Activated T-helper 2 cell treated with anti-CD3 and anti-CD28 coated beads, Interferon-gamma antibody, Interleukin-2, Interleukin-4, amounts not matched to agents 10 μg/mL and 5 μg/mL and 100 μg/mL, durations not matched to agents 14 hours and 24 hours and 36 hours (primary cell): ENCODE measurements at regions of chr14 and their contacts with region 1.

Region 1: DNA sequence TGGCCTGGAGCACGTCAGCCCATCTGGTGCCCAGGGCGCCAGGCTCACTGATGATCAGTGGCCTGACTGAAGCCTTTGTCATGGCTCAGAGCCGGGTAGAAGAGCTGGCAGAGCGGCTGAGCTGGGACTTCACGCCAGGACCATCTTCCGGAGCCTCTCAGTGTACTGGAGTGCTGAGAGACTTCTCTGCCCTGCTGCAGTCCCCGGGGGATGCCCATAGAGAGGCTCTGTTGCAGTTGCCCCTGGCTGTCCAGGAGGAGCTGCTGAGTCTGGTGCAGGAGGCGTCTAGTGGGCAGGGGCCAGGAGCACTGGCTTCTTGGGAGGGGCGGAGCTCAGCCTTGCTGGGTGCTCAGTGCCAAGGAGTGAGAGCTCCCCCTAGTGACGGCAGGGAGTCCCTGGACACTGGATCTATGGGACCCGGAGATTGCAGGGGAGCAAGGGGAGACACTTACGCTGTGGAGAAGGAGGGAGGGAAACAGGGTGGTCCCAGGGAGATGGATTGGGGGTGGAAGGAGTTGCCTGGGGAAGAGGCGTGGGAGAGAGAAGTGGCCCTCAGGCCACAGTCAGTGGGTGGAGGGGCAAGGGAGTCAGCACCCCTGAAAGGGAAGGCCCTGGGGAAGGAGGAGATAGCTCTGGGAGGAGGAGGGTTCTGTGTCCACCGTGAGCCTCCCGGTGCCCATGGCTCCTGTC is 2.0 kb downstream of the KHNYN start:
- DNase-seq: peak; percentile 83
- H3K4me3 Mint-ChIP-seq: peak overlapping the region; percentile 84
- H3K27ac Mint-ChIP-seq: peak overlapping the region; percentile 91
- H3K4me1 Mint-ChIP-seq: peaks cover 30% of the 10 kb centered on the region
- H3K27me3 Mint-ChIP-seq: no peaks in the 10 kb centered on the region

Region 2: DNA sequence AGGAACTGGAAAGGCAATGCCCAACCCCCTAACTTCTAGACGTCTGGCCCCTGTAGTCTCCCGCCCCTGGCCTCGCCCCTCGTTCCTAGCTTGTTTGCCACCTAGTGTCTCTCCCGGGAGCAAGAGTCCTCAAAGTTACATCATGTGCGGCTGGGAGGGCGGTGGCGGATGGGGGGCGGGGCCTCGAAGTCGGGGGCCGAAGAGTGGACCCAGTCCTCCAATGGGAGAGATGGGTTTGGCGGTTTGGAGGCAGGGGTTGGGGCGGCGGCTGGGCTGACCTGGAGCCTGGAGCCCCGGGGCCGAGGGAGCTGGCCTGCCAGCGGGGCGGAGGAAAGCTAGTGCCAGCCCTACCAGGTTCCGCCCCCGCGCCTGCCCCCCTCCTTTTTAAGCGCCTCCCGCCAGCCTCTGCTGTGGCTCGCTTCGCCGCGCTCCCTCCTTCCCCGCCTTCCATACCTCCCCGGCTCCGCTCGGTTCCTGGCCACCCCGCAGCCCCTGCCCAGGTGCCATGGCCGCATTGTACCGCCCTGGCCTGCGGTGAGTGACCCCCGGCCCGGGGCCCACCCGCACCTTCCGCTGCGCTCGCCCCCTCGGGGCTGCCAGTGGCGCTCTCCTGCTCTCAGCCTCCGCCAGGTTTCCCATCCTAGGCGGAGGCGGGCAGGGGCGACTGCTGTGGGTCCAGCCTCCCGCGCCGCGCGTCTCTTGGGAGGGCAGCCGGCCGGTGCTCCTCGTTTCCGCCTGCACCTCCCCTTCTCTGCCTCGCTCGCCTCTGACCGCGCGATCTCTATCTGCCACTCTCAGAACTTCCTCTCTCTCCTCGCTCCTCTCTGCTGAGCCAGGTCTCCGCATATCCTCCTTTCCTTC is 337.6 kb before region 1 on chr14 and contains the start of gene PCK2:
- intact Hi-C with region 1: loop called (anchors 10 kb)
- DNase-seq: peak; percentile 68
- H3K4me3 Mint-ChIP-seq: peak within 1 kb of the TSS; percentile 97
- H3K27ac Mint-ChIP-seq: peak within 1 kb of the TSS; percentile 98
- H3K4me1 Mint-ChIP-seq: peaks cover 31% of the 10 kb centered on the region
- H3K27me3 Mint-ChIP-seq: no peaks in the 10 kb centered on the region
- total RNA-seq, gene PCK2: 62.7 and 62.8 TPM in 2 replicates

Region 3: DNA sequence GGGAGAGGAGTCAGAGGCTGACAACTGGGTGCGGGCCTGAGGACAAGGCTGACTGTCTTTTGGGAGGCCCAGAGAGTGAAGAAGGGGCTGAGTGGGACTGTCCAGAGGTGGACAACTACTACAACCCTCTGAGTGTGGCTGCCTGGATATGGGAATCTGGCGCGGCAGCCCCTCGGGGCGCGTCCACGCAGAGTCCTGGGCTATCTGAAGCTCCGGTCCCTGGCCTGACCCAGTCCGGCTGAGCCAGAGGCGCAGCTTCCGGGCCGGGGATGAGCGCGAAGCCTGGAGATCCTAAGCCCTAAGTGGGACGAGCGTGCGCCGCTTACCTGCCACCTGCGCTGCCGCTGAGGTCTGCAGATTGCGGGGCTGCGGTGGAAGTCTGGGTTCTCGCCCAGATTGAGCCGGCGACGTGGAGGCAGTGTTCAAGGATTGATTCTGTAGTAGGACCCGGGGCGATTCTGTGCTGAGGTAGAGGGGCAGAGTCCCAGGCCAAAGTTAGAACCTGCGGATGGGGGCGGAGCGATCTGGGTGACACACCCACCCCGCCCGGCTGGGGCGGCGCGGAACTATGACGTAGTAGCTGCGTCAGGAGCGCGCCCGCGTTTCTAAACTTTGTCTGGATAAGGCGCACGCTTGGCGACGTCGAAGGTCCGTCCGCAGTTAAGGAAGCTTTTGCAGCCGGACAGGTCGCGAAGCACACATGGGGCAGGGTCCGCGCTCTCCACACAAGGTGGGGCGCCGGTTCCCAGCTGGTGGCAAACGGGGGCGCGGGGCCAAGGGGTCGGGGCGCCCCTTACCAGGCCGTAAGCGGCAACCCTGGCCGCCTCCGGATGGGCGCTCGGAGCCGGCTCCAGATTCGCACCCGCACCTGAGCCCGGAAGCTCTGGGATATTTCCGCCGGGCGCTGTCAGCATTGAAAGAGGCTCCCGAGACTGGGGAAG is 132.2 kb before region 1 on chr14 and contains the starts of genes DHRS1 and NOP9:
- intact Hi-C with region 1: loop called (anchors 1 kb)
- DNase-seq: peak; percentile 89
- H3K4me3 Mint-ChIP-seq: peak within 1 kb of the TSS; percentile 90
- H3K27ac Mint-ChIP-seq: peak within 1 kb of the TSS; percentile 88
- H3K4me1 Mint-ChIP-seq: peaks cover 33% of the 10 kb centered on the region
- H3K27me3 Mint-ChIP-seq: no peaks in the 10 kb centered on the region
- total RNA-seq, gene DHRS1: 9.7 and 10.4 TPM in 2 replicates
- total RNA-seq, gene NOP9: 39.7 and 42.0 TPM in 2 replicates

Region 4: GRCh38 chr14:24366721-24367513 is 64.8 kb before region 1 on chr14:
- intact Hi-C with region 1: loop called (anchors 2 kb)
- DNase-seq: no peak
- H3K4me3 Mint-ChIP-seq: no peak overlapping the region
- H3K27ac Mint-ChIP-seq: no peak overlapping the region
- H3K4me1 Mint-ChIP-seq: peaks cover 11% of the 10 kb centered on the region
- H3K27me3 Mint-ChIP-seq: peaks cover 54% of the 10 kb centered on the region

Region 5: GRCh38 chr14:24411443-24412389 is 20.0 kb before region 1 on chr14:
- intact Hi-C with region 1: no loop called
- DNase-seq: no peak
- H3K4me3 Mint-ChIP-seq: no peak overlapping the region
- H3K27ac Mint-ChIP-seq: no peak overlapping the region
- H3K4me1 Mint-ChIP-seq: no peaks in the 10 kb centered on the region
- H3K27me3 Mint-ChIP-seq: peaks cover 2% of the 10 kb centered on the region

Region 6: DNA sequence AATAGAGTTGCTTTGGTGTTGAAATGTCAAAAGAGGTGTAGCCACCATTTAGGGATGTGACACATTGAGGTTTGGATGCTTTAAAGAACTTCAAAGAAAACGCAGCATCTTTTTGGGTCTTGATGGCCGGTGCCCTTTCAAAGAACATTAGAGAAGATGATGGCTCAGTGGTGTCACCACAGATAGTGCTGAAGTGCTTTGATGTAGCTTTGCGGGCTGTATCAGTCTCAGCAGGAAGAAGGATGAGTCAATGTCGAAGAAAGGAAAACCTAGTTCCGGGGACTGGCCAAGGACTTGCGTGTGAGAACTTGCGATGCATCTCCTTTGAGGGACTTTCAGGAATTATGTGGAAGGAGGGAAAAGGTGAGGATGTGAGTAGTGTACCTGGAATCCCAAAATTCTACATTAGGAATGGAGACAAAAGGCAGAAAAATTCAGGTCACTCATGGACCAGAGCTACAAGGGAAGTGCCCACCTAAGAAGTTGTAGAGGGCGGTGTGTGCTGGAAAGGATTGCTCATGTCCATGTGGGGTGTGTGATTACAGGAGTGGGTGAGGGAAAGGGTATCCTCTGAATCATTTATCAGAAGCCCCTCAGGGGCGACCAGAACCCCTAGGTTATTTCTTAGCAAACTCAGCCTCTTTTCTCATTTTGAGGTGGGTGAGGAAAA is 242.0 kb after region 1 on chr14:
- intact Hi-C with region 1: loop called (anchors 1 kb)
- DNase-seq: peak; percentile 75
- H3K4me3 Mint-ChIP-seq: peak overlapping the region; percentile 73
- H3K27ac Mint-ChIP-seq: peak overlapping the region; percentile 97
- H3K4me1 Mint-ChIP-seq: peaks cover 78% of the 10 kb centered on the region
- H3K27me3 Mint-ChIP-seq: no peaks in the 10 kb centered on the region